Head of caudate nucleus (tissue), 42 donors: ENCODE measurements at regions of chr6 and their contacts with region 1.

Region 1: DNA sequence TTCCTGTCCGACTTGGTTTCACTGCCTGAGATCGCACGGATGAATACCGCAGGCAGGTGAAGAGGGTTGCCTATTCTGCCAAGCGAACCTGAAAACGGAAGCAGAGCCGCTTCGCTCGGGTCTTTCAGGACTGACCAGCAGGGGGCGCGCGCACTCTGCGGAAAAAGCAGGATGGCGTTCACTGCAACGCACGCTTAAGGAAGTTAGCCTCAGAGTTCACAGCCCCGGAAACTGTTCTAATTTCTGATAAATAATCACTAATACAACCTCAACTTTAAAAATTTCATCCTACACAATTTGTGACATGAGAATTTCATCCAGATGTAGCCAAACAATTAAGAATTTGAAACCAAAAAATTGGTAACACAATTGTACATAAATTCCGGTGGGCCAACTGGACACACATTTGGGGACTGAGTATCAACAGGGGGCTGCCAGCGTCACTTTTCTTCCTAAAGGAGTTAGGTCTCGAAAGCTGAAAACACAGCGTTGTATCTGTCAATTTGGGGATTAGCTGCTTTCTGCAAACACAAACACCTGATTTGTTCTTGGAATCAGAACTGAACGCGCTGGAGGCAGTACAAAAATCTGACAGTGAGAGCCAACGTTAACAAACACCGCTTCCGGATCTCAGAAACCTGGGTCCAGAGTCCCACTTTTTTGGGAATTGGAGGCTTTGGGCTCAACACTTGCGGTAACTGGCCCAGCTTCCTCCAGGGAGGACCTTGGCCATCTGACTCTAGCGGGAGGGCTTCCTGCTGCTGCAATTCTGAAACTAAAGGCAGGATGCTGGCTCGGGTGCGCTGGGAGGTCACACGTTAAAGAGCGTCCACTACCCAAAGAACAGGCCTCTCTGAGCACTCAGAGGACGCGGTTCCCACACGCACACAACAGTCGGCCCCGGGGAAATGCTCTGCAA is 8.8 kb downstream of the PXDC1 start:
- DNase-seq: peak; percentile 78 to 97 (median 90)

Region 2: DNA sequence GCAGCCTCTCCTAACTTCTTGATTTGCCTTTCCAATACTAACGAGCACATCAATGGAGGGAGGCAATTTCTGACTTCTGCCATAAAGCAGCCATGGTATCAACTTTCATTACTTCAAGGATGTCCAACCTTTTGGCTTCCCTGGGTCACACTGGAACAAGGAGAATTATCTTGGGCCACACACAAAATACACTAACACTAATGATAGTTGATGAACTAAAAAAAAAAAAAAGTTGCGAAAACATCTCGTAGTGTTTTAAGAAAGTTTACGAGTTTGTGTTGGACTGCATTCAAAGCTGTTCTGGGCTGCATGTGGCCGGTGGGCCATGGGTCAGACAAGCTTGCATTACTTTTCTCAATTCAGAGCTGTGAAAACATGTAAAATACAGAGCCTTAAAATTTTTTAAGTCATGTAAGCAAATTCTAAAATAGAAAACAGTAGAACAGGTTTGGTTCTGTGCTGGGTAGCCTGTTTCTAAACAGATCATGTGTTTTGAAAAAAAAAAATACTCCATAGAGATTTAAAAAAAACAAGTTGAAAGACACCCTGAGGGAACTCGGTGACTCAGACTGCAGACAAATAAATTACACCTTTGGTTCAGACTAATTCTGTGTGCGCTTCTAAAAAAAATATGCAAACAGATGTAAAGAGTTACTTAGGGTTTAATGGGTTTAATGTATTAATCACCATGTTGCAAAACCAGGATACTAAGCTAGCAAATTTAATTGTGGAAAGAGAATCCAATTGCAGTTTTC is 242.2 kb before region 1 on chr6:
- intact Hi-C with region 1: no loop called
- DNase-seq: no peak

Region 3: DNA sequence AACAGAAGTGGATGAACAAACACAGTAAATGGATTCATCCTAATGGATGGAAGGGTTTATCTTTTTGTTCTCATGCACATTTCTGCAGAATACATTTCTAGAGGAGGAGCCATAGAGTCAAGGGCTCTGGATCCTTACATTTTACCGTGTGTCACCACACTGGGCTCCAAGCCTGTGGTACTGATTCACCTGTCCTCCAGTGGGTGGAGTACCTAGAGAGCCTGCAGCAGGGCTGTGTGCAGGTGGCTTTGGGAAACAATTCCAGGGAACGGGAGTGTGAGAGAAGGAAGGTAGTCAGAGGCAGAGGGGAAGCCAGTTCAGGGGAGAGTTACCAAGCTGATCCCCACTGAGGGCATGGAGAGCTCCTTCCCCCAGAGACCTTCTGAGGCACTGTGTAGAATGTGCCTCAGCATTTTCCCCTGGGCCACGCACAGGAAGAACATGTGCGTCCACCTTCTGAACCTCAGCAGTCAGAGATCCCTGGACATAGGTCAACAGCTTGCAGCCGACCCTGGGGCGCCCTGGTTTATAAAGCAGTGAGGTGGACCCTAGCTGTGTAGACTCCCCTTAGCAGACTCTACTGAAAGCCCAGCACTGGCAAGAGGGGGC is 200.5 kb before region 1 on chr6:
- intact Hi-C with region 1: no loop called
- DNase-seq: no peak

Region 4: GRCh38 chr6:3848925-3849605 is 106.4 kb after region 1 on chr6 and contains the start of gene FAM50B:
- intact Hi-C with region 1: loop called (anchors 2 kb)
- DNase-seq: peak; percentile 86 to 97 (median 94)

Region 5: GRCh38 chr6:3887150-3887700 is 144.5 kb after region 1 on chr6:
- intact Hi-C with region 1: loop called (anchors 5 kb)
- DNase-seq: peak in 16 of 42 donors; percentile 20 to 66 (median 36)

Region 6: GRCh38 chr6:3990692-3991501 is 248.2 kb after region 1 on chr6:
- intact Hi-C with region 1: loop called (anchors 5 kb)
- DNase-seq: peak; percentile 83 to 96 (median 91)

Region 7: DNA sequence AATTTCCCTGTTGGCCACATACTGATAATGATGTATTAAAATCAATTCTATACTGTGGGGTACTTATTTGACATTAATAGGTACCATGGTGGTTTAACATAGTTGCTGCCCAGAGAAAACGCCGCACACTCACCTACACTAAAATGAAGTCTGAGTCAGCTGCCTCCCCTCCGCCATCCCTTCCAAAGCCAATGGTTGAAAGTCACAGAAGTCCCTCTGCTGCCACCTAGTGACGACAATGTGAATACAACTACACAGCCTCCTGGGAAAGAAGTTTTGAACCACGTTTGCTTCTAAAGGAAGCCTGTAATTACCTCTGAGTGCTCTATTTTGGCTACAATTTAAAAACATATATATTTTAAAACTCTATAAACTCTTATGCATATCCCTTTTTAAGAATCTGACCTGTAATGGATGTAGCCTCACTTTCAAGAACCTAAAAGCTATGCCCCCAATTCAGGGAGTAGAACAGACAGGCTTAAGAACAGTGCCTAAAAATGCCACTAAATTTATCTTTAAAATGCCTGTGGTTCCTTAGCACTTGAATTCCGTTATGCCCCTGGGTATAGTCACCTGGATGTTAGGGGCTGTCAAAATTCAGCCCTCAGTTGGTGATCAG is 413.3 kb after region 1 on chr6:
- intact Hi-C with region 1: loop called (anchors 10 kb)
- DNase-seq: peak; percentile 47 to 94 (median 84)